Mucosa of descending colon (tissue), 3 donors: ENCODE measurements at regions of chr7 and their contacts with region 1.

Region 1: GRCh38 chr7:98841179-98841997 is 28.4 kb downstream of the TMEM130 start:
- DNase-seq: peak; percentile 53 to 77 (median 76)
- ATAC-seq: peak; percentile 85
- H3K4me3 ChIP-seq: no peak overlapping the region
- H3K4me1 ChIP-seq: no peaks in the 10 kb centered on the region
- CTCF ChIP-seq: peak; percentile 93

Region 2: GRCh38 chr7:98434095-98434494 is 407.3 kb before region 1 on chr7:
- intact Hi-C with region 1: loop called (anchors 2 to 5 kb)
- DNase-seq: no peak
- ATAC-seq: no peak
- H3K4me3 ChIP-seq: no peak overlapping the region
- H3K4me1 ChIP-seq: no peaks in the 10 kb centered on the region
- CTCF ChIP-seq: no peak

Region 3: GRCh38 chr7:98771519-98771918 is 69.9 kb before region 1 on chr7:
- intact Hi-C with region 1: loop called in 1 of 2 experiments (anchors 10 kb)
- DNase-seq: peak in 2 of 3 donors; percentile 33 to 46
- ATAC-seq: peak; percentile 61
- H3K4me3 ChIP-seq: no peak overlapping the region
- H3K4me1 ChIP-seq: no peaks in the 10 kb centered on the region
- CTCF ChIP-seq: no peak